Activated CD8-positive, alpha-beta T cell treated with anti-CD3 and anti-CD28 coated beads for 36 hours (primary cell): ENCODE measurements at regions of chr18 and their contacts with region 1.

Region 1: DNA sequence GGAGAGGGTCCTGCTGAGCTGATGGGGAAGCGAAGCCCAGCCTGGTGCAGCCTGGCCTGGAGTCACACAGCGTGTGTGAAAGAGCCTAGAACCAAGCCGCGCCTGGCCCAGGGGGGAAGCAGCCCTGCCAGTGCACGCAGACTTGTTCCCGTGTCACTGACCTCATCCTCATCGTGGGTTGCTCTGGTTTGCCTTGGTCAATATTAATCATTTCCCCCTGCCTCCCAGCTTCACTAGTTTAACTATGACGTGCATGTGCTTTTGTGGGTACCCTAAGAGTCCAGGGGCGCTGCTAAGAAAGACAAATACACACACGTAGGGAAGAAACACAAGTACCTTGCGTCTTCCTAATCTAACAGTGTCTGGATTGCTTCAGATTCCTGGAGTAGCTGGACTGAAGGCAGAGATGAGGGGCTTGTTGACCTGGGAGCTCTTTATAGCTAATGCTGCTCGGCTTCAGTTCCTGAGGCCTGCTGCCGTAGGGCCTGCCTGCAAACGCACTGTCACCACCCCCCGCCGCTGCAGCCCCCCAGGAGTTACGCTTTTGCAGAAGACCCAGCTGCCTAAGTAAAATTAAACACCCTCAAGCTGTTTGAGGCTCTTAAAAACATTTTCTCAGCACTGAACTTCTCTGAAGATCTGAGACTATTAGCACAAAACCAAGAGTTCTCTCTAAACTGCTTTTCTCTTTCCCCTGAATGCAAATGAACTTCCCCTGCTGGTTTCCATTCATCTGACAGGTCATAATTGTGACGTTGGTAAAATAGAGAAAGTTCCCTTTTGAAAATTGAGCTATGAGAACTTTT is 159.2 kb downstream of the FAM210A start:
- DNase-seq: peak; percentile 81
- ATAC-seq: peak; percentile 34
- H3K4me3 Mint-ChIP-seq: peak overlapping the region; percentile 56
- H3K27ac Mint-ChIP-seq: peak overlapping the region; percentile 95
- H3K4me1 Mint-ChIP-seq: peaks cover 85% of the 10 kb centered on the region
- H3K27me3 Mint-ChIP-seq: no peaks in the 10 kb centered on the region
- CTCF ChIP-seq: no peak

Region 2: GRCh38 chr18:13516855-13517254 is 50.3 kb before region 1 on chr18:
- CTCF ChIA-PET with region 1: no interaction called
- POLR2A ChIA-PET with region 1: no interaction called
- intact Hi-C with region 1: no loop called
- DNase-seq: no peak
- ATAC-seq: no peak
- H3K4me3 Mint-ChIP-seq: no peak overlapping the region
- H3K27ac Mint-ChIP-seq: no peak overlapping the region
- H3K4me1 Mint-ChIP-seq: peaks cover 27% of the 10 kb centered on the region
- H3K27me3 Mint-ChIP-seq: no peaks in the 10 kb centered on the region
- CTCF ChIP-seq: no peak

Region 3: DNA sequence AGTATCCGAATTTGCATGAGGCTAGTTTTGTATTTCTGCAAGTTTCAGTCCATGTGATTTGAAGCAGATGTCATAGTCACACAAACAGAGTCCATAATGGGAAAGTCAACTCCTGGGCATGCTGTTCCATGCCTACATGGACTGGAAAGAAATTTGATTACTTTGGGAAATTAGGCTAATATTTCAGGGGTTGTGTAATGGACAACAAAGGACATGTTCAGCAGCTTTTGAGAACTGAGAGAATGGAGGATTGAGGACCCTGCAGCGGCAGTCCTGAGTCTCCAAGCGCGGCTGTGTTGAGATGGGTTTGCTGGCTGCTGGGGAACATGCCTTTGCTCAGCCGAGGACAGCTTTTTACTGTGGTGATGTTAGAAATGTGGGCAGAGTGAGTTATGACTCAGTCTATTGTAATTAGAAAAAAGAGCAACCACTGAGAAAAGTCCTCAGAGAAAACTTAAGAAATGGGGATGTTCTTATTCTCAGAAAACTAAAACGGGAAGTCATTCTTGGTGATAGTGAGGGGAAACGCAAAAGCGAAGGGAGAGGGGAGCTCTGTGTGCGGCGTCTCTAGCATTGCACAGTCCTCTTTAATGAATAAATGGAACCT is 10.1 kb after region 1 on chr18:
- CTCF ChIA-PET with region 1: interaction called, 3 read pairs
- POLR2A ChIA-PET with region 1: interaction called, 18 read pairs
- intact Hi-C with region 1: loop called (anchors 2 kb)
- DNase-seq: peak; percentile 75
- ATAC-seq: peak; percentile 83
- H3K4me3 Mint-ChIP-seq: peak overlapping the region; percentile 56
- H3K27ac Mint-ChIP-seq: peak overlapping the region; percentile 88
- H3K4me1 Mint-ChIP-seq: peaks cover 59% of the 10 kb centered on the region
- H3K27me3 Mint-ChIP-seq: no peaks in the 10 kb centered on the region
- CTCF ChIP-seq: no peak

Region 4: GRCh38 chr18:13585379-13586153 is 18.4 kb after region 1 on chr18:
- CTCF ChIA-PET with region 1: interaction called, 4 read pairs
- POLR2A ChIA-PET with region 1: interaction called, 13 read pairs
- intact Hi-C with region 1: loop called (anchors 2 kb)
- DNase-seq: no peak
- ATAC-seq: no peak
- H3K4me3 Mint-ChIP-seq: peak overlapping the region; percentile 24
- H3K27ac Mint-ChIP-seq: peak overlapping the region; percentile 38
- H3K4me1 Mint-ChIP-seq: peaks cover 64% of the 10 kb centered on the region
- H3K27me3 Mint-ChIP-seq: no peaks in the 10 kb centered on the region
- CTCF ChIP-seq: no peak